ENCODE measurements at regions of chr15 and their contacts with region 1.

Region 1: GRCh38 chr15:39782441-39783138 is at the start of gene FSIP1:
- DNase-seq: peak; percentile 84 to 97
- H3K4me3 ChIP-seq: peak within 1 kb of the TSS; percentile 98
- H3K27ac ChIP-seq: peak within 1 kb of the TSS; percentile 31; the same call in 1 of the 2 replicates
- H3K4me1 ChIP-seq: peaks cover 9% of the 10 kb centered on the region
- H3K27me3 ChIP-seq: no peaks in the 10 kb centered on the region
- CTCF ChIP-seq: no peak
- total RNA-seq, gene FSIP1: 0.63 and 1.2 TPM in 2 replicates

Region 2: DNA sequence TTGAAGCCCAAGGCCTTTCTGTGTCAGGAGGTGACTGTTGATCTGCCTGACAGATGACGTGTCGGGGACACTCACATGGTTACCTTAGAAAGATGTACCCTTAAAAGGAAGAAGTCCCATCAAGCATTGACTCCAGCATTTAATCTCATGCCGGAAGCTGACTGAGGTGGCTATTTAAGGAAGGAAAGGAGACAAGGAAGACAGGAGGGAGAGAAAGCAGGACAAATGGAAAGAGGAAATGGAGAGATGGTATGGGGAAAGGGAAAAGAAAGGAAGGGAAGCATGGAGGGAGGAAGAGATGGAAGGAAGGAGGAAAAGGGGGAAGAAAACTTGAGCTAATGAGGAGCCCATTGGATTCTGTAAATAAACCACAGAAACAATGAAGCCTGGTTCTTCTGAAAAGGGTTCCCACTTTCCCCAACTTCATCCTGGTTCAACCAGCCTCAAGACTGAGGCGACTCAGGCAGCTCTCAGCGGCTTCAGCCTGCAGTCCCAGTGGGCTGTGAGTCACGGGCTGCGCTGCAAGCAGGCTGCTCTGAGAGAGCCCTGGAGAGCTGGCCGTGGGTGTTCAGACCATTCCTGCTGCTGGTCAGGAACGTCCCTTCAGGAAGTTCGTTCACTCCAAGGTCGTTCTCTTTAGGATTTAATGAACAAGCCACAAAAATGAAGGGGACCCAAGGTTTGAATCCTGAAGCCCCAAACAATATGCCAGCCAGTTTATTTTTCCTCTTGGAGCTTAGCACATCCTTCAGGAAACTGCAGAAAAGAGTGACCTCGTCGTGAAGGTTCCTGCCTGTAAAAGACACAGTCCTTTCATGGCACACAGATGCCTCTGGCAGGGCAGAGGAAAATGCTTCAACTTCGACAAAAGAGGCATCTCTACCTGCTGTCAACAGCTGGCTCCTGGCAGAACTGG is 271.3 kb before region 1 on chr15:
- CTCF ChIA-PET with region 1: no interaction called
- POLR2A ChIA-PET with region 1: no interaction called
- intact Hi-C with region 1: no loop called
- DNase-seq: peak in 1 of 2 experiments; percentile 42
- H3K4me3 ChIP-seq: no peak overlapping the region
- H3K27ac ChIP-seq: no peak overlapping the region
- H3K4me1 ChIP-seq: no peaks in the 10 kb centered on the region
- H3K27me3 ChIP-seq: no peaks in the 10 kb centered on the region
- CTCF ChIP-seq: no peak

Region 3: GRCh38 chr15:39874890-39875549 is 92.4 kb after region 1 on chr15:
- CTCF ChIA-PET with region 1: no interaction called
- POLR2A ChIA-PET with region 1: no interaction called
- intact Hi-C with region 1: loop called (anchors 10 kb)
- DNase-seq: peak in 1 of 2 experiments; percentile 10
- H3K4me3 ChIP-seq: no peak overlapping the region
- H3K27ac ChIP-seq: no peak overlapping the region
- H3K4me1 ChIP-seq: peaks cover 13% of the 10 kb centered on the region
- H3K27me3 ChIP-seq: no peaks in the 10 kb centered on the region
- CTCF ChIP-seq: peak; percentile 49; the same call in 1 of the 2 replicates

Region 4: GRCh38 chr15:39934397-39935071 is 151.9 kb after region 1 on chr15:
- CTCF ChIA-PET with region 1: no interaction called
- POLR2A ChIA-PET with region 1: no interaction called
- intact Hi-C with region 1: loop called (anchors 5 kb)
- DNase-seq: peak in 1 of 2 experiments; percentile 8
- H3K4me3 ChIP-seq: peak overlapping the region; percentile 93
- H3K27ac ChIP-seq: peak overlapping the region; percentile 88
- H3K4me1 ChIP-seq: peaks cover 23% of the 10 kb centered on the region
- H3K27me3 ChIP-seq: no peaks in the 10 kb centered on the region
- CTCF ChIP-seq: no peak

Region 5: GRCh38 chr15:40038638-40039543 is 256.3 kb after region 1 on chr15 and contains the start of gene SRP14:
- CTCF ChIA-PET with region 1: interaction called, 3 read pairs
- POLR2A ChIA-PET with region 1: no interaction called
- intact Hi-C with region 1: loop called (anchors 5 kb)
- DNase-seq: peak; percentile 71 to 88
- H3K4me3 ChIP-seq: peak within 1 kb of the TSS; percentile 84
- H3K27ac ChIP-seq: peak within 1 kb of the TSS; percentile 57
- H3K4me1 ChIP-seq: peaks cover 14% of the 10 kb centered on the region
- H3K27me3 ChIP-seq: no peaks in the 10 kb centered on the region
- CTCF ChIP-seq: no peak
- total RNA-seq, gene SRP14: 141 and 196 TPM in 2 replicates

Region 6: GRCh38 chr15:40081691-40082194 is 299.2 kb after region 1 on chr15:
- CTCF ChIA-PET with region 1: interaction called, 10 read pairs
- POLR2A ChIA-PET with region 1: no interaction called
- intact Hi-C with region 1: no loop called
- DNase-seq: peak in 1 of 2 experiments; percentile 41
- H3K4me3 ChIP-seq: peak overlapping the region; percentile 44; the same call in 1 of the 2 replicates
- H3K27ac ChIP-seq: no peak overlapping the region
- H3K4me1 ChIP-seq: peaks cover 34% of the 10 kb centered on the region
- H3K27me3 ChIP-seq: no peaks in the 10 kb centered on the region
- CTCF ChIP-seq: no peak

Region 7: DNA sequence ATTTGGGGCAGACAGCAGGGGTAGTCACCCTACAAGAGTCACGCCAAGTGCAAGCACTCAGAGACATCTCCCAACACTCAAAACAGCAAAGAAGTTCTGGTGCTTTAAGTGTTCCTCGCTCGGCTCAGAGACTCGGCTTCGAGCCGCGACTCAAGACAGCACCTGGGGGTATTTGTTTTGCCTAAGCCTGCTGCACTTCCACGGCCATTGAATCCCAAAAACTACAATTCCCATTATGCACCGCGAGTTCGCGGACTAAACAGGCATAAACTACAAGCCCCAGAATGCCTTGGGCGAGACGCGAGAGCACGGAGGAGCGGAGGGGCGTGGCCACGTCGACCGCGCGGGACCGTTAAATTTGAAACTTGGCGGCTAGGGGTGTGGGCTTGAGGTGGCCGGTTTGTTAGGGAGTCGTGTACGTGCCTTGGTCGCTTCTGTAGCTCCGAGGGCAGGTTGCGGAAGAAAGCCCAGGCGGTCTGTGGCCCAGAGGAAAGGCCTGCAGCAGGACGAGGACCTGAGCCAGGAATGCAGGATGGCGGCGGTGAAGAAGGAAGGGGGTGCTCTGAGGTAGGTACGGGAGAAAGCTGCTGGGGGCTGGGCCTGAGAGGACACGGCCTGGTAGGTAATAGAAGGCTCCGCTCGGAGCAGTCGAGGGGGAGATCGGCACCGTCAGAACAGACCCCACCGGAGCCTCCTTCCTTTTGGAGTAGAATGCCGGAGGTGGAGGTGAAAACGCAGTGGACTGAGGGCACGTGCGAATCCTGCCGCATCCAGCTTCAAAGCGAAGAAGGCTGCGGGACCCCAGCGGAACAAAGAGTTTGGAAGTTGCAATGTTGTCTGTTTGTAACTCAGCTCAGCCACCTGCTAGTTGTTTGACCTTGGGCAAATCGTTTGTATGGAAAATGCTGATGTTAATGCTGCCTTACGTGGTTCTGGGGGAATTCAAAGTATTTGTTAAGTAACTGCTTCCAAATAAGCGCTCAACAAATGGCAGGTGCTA is 378.4 kb after region 1 on chr15 and contains the start of gene BUB1B:
- CTCF ChIA-PET with region 1: no interaction called
- POLR2A ChIA-PET with region 1: no interaction called
- intact Hi-C with region 1: loop called (anchors 10 kb)
- DNase-seq: peak; percentile 91 to 92
- H3K4me3 ChIP-seq: peak within 1 kb of the TSS; percentile 67
- H3K27ac ChIP-seq: no peak within 1 kb of the TSS
- H3K4me1 ChIP-seq: peaks cover 29% of the 10 kb centered on the region
- H3K27me3 ChIP-seq: no peaks in the 10 kb centered on the region
- CTCF ChIP-seq: no peak
- total RNA-seq, gene BUB1B: 74.3 and 75.3 TPM in 2 replicates